Psoas muscle (tissue), 8 donors: ENCODE measurements at regions of chr10 and their contacts with region 1.

Region 1: DNA sequence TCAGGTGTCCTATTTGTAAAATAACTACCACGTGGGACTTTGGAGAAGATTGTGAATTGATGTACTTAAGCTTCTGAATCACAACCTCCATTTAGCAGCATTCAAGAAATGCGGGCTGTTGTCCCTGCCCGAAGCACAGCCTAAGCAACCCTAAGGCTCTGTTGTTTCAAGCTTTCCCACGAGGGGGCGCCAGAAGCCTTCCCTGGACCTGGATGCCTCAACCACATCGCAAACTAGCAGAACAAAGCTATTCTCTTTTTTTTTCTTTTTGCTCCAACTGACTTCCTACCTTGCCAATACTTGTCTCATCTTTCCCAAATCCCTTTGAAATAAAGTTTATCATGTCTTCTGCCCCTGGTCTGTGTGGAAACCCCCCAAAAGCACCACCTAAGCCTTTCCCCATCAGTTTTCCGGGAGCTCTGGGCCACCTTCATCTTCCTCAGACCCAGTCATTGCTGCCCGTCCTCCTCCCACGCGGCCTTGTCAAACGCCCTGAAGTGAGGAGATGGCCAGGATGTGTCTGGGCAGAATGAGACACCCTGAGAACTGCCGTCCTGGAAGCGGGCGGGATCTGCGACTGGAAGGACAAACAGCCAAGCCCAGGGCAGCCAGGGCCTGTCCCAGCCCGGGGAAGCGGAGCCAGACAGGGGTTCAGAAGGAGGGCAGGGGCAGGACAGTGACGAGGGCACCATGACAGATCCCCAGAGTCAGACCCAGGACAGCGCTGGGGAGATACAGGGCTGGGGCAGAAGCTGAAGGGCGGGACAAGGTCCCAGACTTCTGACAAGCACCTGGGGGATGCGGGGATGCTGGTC is 112.7 kb downstream of the SLIT1 start:
- DNase-seq: peak; percentile 78 to 89
- ATAC-seq: peak; percentile 84 to 96 (median 92)
- H3K4me3 ChIP-seq: no peak overlapping the region
- H3K27ac ChIP-seq: no peak overlapping the region
- H3K4me1 ChIP-seq: no peaks in the 10 kb centered on the region
- H3K27me3 ChIP-seq: peaks cover 0 to 3% (median 0%) of the 10 kb centered on the region in 3 donors
- CTCF ChIP-seq: peak; percentile 95

Region 2: DNA sequence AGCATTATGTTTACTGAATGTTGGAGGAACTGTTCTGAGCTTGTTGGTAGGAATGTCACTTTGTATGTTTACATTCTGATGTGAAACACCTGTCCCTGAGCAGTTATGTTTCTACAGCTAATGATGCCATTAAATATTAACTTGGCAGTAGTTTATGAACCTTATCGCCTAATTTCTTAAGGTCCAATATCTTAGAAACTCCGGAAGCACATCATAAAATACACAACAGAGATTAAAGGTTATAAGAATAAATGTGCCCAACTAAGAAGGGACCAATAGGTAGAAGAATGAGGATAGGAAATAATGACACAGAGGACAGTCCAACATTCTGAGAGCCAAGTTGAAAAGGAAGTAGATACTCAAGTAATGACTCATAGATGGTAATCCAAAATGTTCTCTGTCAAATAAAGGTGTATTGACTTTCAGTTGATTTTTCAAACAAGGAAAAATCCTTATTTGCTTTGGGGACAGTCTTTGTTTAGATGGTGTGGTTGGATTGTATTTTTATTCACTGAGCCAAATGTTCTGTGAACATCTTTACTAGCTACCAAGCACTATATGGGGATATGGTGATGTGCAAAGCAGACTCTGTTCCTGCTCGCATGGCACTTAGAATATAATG is 209.0 kb before region 1 on chr10:
- intact Hi-C with region 1: no loop called
- DNase-seq: no peak
- ATAC-seq: peak; percentile 56 to 60 (median 58)
- H3K4me3 ChIP-seq: no peak overlapping the region
- H3K27ac ChIP-seq: peak overlapping the region; percentile 31
- H3K4me1 ChIP-seq: peaks cover 36% of the 10 kb centered on the region
- H3K27me3 ChIP-seq: no peaks in the 10 kb centered on the region
- CTCF ChIP-seq: no peak

Region 3: GRCh38 chr10:96978621-96979154 is 94.4 kb before region 1 on chr10:
- intact Hi-C with region 1: no loop called
- DNase-seq: no peak
- ATAC-seq: no peak
- H3K4me3 ChIP-seq: no peak overlapping the region
- H3K27ac ChIP-seq: no peak overlapping the region
- H3K4me1 ChIP-seq: no peaks in the 10 kb centered on the region
- H3K27me3 ChIP-seq: no peaks in the 10 kb centered on the region
- CTCF ChIP-seq: no peak

Region 4: GRCh38 chr10:97037365-97038361 is 35.4 kb before region 1 on chr10:
- intact Hi-C with region 1: loop called in 1 of 2 experiments (anchors 5 kb)
- DNase-seq: peak; percentile 73 to 84
- ATAC-seq: peak; percentile 83 to 96 (median 92)
- H3K4me3 ChIP-seq: peak overlapping the region; percentile 56
- H3K27ac ChIP-seq: no peak overlapping the region
- H3K4me1 ChIP-seq: peaks cover 5% of the 10 kb centered on the region
- H3K27me3 ChIP-seq: no peaks in the 10 kb centered on the region
- CTCF ChIP-seq: peak; percentile 85

Region 5: DNA sequence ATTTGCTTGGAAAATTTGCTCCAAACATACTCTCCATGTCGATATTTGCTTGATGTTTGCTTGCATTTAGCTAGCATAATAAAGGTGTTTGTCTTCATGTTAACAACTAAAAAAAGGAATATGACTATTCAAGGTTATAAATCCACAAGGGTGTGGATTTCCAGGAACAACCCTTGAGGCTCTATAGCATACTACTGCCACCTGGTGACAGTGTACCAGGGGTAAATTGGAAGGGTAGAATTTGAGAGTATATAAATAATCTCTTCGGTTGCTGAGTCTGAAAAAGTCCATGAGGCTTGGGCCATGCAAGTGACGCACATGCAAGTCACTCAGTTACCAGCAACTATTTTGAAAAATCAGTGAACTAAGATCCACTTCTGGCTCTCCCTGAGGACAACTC is 44.3 kb after region 1 on chr10:
- intact Hi-C with region 1: loop called (anchors 2 kb)
- DNase-seq: no peak
- ATAC-seq: peak; percentile 82 to 99 (median 95)
- H3K4me3 ChIP-seq: no peak overlapping the region
- H3K27ac ChIP-seq: no peak overlapping the region
- H3K4me1 ChIP-seq: peaks cover 5% of the 10 kb centered on the region
- H3K27me3 ChIP-seq: no peaks in the 10 kb centered on the region
- CTCF ChIP-seq: peak; percentile 74

Region 6: DNA sequence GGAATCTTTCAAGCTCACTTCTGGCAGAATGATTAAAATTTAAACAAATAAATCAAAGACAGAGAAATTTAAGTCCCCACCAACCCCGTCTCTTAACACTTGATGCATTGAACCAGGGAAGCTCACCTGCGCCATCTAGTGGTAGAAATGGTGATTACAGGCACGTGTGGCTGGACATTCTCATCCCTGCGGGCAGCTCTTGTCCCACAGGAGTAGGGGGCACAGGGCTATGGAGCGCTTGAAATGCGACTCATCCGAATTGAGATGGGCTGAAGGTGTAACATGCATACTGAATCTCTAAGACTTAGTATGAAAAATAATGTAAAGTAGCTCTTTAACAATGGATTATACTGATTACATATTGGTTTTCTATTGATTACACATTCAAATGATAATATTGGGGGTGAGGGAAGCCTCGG is 137.5 kb after region 1 on chr10:
- intact Hi-C with region 1: loop called (anchors 2 to 5 kb)
- DNase-seq: peak; percentile 60 to 72
- ATAC-seq: peak; percentile 76 to 90 (median 80)
- H3K4me3 ChIP-seq: no peak overlapping the region
- H3K27ac ChIP-seq: no peak overlapping the region
- H3K4me1 ChIP-seq: no peaks in the 10 kb centered on the region
- H3K27me3 ChIP-seq: no peaks in the 10 kb centered on the region
- CTCF ChIP-seq: peak; percentile 98

Region 7: DNA sequence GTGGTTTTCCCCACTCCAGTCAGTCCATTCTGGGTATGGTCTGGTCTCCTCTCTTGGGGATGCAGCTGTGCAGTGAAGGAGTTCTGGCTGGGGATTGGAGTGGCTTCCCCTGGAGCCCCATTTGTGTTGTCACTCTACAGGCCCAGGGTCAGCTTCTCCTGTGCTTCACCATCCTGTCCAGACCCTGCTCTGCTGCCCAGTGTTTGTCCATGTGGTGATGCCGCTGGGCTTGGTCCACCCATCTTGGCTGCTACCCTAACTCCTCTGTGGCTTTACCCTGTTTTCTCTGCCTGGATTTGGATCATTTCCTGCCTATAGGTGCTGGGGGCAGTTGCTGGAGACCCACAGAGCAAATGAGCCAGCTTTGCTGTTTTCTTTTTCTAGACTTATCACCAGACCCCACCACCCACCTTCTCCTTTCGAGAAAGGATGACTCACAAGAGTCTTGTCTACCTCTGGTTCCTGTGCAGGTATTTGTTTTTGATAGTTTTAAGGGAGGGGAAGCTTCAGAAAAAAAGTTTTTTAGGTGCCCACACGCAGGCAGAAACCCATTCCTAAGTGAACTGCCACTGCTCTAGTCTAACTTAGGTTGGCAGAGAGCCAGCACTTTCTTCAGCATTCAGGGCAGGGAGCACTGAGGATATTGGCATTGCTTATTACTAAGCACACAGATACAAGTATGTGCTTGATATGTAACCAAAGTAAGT is 381.4 kb after region 1 on chr10:
- intact Hi-C with region 1: no loop called
- DNase-seq: no peak
- ATAC-seq: peak in 2 of 4 donors; percentile 14 to 56
- H3K4me3 ChIP-seq: no peak overlapping the region
- H3K27ac ChIP-seq: no peak overlapping the region
- H3K4me1 ChIP-seq: peaks cover 7% of the 10 kb centered on the region
- H3K27me3 ChIP-seq: no peaks in the 10 kb centered on the region
- CTCF ChIP-seq: no peak